Activated CD8-positive, alpha-beta T cell treated with anti-CD3 and anti-CD28 coated beads for 36 hours (primary cell): ENCODE measurements at regions of chr14 and their contacts with region 1.

Region 1: DNA sequence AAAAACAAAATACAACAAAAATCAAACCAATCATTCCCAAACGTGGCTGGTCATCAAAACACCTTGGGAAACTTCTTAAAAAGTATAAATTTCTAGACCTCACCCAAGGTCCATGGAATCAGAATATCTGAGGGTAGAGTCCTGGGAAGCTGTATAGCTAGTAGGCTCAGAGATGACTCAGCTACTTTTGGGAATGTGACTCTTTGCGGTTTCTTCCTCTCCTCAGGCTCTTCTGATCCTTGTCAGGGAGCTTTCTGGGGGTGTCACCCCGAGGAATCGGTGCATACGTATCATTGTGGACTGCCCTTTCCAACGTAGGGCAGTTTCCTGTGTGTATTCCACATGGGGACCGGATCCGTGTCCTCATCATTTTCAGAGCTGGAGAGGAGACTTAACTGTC is 14.8 kb downstream of the JDP2 start:
- DNase-seq: no peak
- ATAC-seq: no peak
- H3K4me3 Mint-ChIP-seq: no peak overlapping the region
- H3K27ac Mint-ChIP-seq: no peak overlapping the region
- H3K4me1 Mint-ChIP-seq: no peaks in the 10 kb centered on the region
- H3K27me3 Mint-ChIP-seq: no peaks in the 10 kb centered on the region
- CTCF ChIP-seq: no peak

Region 2: DNA sequence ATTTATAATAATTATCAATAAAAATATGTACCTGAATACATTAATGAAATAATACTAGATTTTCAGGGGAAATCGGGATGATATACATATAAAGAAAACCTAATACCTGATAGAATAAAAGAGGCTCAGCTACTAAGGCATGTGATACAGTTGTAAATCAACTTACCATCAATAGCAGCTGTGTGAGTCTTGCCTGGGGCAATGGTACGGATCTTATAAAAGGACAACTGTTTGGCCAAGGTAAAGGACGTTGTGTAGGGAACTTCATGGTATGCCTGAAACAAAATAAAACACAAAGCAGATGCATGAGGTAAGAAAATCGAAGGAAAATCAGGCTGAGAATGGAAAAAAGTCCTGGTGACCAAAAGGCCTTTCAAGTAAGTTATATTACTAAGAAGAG is 341.2 kb before region 1 on chr14:
- CTCF ChIA-PET with region 1: no interaction called
- POLR2A ChIA-PET with region 1: no interaction called
- intact Hi-C with region 1: no loop called
- DNase-seq: no peak
- ATAC-seq: no peak
- H3K4me3 Mint-ChIP-seq: no peak overlapping the region
- H3K27ac Mint-ChIP-seq: no peak overlapping the region
- H3K4me1 Mint-ChIP-seq: no peaks in the 10 kb centered on the region
- H3K27me3 Mint-ChIP-seq: no peaks in the 10 kb centered on the region
- CTCF ChIP-seq: no peak

Region 3: DNA sequence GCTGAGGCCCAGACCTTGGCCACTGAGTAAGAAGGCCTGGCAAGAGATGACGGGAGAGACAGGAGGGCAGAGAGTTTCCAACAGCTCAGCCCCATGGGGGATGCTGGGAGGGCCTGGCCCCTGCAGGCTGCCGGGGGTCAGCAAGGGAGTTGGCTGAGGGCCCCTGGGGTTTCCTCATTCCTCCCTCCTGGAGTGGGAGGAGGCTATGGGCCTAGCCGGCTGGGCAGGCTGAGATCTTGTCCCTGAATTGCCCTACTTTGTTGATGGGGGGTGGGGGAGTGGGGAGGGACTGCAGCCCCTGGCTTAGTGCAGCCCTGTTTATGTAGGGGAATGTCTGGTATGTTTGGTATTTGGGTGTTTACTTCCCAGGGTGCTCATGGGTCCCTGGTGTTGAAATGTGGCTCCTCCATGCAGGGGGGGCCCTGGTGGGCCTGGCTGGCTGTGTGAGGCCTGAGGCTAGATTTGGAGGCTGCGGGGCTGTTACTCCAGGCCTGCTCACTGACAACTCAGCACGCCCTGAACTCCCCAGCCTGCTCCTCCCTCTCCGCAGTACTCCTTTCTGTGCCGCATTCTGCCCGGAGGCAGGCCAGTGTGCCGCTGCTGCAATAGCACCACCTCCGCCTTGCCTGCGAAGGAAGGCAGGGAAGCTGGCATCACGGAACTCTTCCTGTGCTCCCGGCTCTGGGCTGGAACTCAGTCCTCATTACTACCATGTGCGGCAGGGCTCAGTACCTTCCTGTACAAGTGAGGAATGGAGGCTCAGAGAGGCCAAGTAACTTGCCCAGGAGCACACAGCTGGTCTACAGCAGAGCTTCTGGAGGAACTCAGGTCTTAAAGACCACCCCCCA is 10.5 kb after region 1 on chr14:
- CTCF ChIA-PET with region 1: interaction called, 17 read pairs
- POLR2A ChIA-PET with region 1: no interaction called
- intact Hi-C with region 1: no loop called
- DNase-seq: no peak
- ATAC-seq: no peak
- H3K4me3 Mint-ChIP-seq: no peak overlapping the region
- H3K27ac Mint-ChIP-seq: no peak overlapping the region
- H3K4me1 Mint-ChIP-seq: no peaks in the 10 kb centered on the region
- H3K27me3 Mint-ChIP-seq: peaks cover 2% of the 10 kb centered on the region
- CTCF ChIP-seq: no peak